PC-9 (cell line): ENCODE measurements at regions of chr11 and their contacts with region 1.

Region 1: GRCh38 chr11:129458756-129459535 is 83.3 kb downstream of the BARX2 start:
- DNase-seq: no peak
- H3K4me3 ChIP-seq: no peak overlapping the region
- H3K27ac ChIP-seq: no peak overlapping the region
- H3K4me1 ChIP-seq: peaks cover 13% of the 10 kb centered on the region
- H3K27me3 ChIP-seq: no peaks in the 10 kb centered on the region
- CTCF ChIP-seq: no peak

Region 2: DNA sequence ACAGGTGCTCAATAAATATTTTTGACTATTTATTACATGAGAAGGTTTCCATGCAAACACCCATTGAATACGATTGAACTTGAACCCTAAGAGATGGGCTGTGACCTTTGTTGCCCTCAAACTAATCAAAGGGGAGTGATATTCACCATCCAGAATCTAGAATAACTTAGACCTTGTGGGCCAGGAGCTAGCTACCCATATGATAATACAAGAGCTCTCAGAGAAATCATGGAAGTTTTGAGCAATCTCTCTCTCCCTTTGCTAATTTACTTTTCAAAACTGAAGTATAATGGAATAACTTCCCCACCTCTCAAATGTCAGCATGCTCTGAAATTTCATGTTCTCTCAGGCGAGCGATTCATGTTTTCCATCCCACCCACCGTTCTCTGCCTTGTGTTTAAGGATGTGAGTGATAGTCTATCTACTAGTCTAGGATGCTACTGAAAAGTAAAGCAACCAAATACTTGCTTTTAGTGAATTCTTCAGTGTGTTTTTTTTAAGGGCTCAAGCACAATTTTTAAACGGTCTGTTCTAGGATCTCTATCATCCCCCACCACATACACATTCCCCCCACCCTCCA is 50.0 kb before region 1 on chr11:
- CTCF ChIA-PET with region 1: no interaction called
- POLR2A ChIA-PET with region 1: no interaction called
- intact Hi-C with region 1: no loop called
- DNase-seq: no peak
- H3K4me3 ChIP-seq: no peak overlapping the region
- H3K27ac ChIP-seq: no peak overlapping the region
- H3K4me1 ChIP-seq: 0 out of 2 replicates have a peak, but pooled peaks cover under 1% of the 10 kb centered on the region
- H3K27me3 ChIP-seq: no peaks in the 10 kb centered on the region
- CTCF ChIP-seq: no peak

Region 3: DNA sequence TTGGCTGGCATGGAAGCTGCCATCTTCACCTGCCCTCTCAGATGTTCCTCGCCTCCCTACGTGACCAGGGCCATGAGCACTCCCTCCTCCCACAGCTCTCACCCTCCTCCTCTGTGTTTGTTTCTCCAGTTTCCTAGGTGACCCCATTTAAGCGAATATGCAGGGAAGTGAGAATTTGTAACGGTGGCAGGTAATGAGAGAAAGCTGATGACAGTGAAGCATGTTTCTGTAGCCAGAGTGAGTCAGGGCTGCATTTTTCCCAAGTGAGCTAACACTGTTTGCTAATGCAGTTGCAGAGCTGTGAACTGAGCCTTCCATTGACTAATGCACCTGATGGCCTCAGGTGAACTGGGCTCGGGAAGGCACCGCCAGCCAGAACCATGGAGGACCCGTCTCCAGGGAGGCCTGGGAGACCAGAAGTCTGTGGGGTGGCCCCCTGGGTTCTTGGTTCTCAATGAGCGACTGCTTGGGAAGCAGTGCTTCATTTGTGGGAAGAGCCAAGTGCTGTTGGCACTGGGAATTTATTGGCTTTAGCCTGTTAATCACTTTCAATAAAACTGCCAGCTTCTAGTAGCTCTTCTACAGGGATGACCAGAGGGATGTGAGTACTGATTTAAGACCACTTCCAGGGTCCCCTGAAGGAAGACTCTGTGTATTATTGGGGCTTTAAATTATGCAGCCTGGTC is 18.8 kb before region 1 on chr11:
- CTCF ChIA-PET with region 1: interaction called, 14 read pairs
- POLR2A ChIA-PET with region 1: no interaction called
- intact Hi-C with region 1: no loop called
- DNase-seq: peak; percentile 75 to 99
- H3K4me3 ChIP-seq: no peak overlapping the region
- H3K27ac ChIP-seq: peak overlapping the region; percentile 71
- H3K4me1 ChIP-seq: peaks cover 32% of the 10 kb centered on the region
- H3K27me3 ChIP-seq: no peaks in the 10 kb centered on the region
- CTCF ChIP-seq: no peak

Region 4: DNA sequence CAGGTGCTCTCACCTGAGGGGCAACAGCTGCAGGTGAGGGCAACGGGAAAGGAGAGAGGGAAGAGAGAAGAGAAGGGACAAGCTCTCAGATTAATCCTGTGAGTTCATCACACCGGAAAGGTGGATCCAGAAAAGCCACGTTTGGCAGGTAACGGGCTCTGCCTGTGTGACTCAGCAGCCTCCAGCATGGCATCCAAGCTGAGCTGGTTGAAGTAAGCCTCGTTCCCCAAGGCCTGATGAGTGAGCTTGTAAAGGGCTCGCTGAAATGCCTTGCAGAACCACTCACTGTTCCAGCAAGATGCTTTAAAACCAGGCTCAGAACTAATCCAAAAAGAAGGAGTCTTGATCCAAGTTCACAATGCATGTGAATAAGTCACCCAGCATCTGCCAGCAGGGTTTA is 149.8 kb after region 1 on chr11:
- CTCF ChIA-PET with region 1: interaction called, 10 read pairs
- POLR2A ChIA-PET with region 1: no interaction called
- intact Hi-C with region 1: loop called (anchors 10 kb)
- DNase-seq: peak in 1 of 2 experiments; percentile 31
- H3K4me3 ChIP-seq: no peak overlapping the region
- H3K27ac ChIP-seq: no peak overlapping the region
- H3K4me1 ChIP-seq: peaks cover 17% of the 10 kb centered on the region; the same call in 1 of the 2 replicates
- H3K27me3 ChIP-seq: no peaks in the 10 kb centered on the region
- CTCF ChIP-seq: no peak